Astrocyte of the cerebellum (primary cell): ENCODE measurements at regions of chr1 and their contacts with region 1.

Region 1: DNA sequence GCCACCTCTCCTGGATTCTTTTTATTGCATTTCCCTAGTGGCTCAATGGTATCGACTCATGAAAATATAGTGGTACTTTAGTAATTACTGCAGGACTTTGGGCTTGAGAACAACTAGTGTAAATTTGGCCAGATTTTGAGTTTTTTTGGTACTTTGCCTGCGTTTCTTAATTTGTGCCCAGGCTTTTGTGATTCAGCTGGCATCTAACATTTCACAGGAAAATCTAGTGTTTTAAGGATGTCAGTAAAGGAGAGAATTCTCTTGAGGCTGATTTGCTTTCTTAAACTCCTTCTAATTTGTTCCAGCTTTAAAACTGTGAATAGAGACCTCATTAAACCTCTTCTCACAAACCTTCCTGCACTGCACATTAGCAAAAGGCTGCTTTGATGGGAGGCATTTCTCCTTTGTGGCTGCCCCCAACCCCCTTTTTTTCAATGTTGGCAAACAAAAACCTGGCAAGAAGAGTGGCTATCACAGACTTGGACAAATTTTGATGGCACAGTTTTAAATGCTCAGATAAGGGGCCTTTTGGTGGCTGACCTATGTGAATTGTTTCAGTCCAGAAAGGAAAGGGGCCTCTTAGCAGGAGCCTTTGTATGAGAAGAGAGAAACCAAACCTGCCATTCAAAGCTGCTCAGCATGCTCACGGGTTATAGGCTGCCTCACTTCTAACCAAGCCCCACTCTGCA is 113.4 kb upstream of the RAVER2 start:
- DNase-seq: no peak
- H3K4me3 ChIP-seq: no peak overlapping the region
- CTCF ChIP-seq: no peak

Region 2: GRCh38 chr1:64535938-64536835 is 95.3 kb before region 1 on chr1:
- in situ Hi-C with region 1: no loop called
- DNase-seq: no peak
- H3K4me3 ChIP-seq: no peak overlapping the region
- CTCF ChIP-seq: no peak

Region 3: GRCh38 chr1:64675718-64676345 is 44.3 kb after region 1 on chr1:
- in situ Hi-C with region 1: loop called (anchors 5 kb)
- DNase-seq: no peak
- H3K4me3 ChIP-seq: no peak overlapping the region
- CTCF ChIP-seq: peak; percentile 71